ENCODE measurements at regions of chr10 and their contacts with region 1.

Region 1: GRCh38 chr10:59580026-59580863 is 129.4 kb downstream of the SLC16A9 start:
- H3K4me3 ChIP-seq: no peak overlapping the region
- H3K27ac ChIP-seq: no peak overlapping the region
- H3K4me1 ChIP-seq: no peaks in the 10 kb centered on the region
- CTCF ChIP-seq: 0 out of 2 replicates have a peak, but pooled peaks have one; percentile 15

Region 2: GRCh38 chr10:59234816-59235429 is 345.3 kb before region 1 on chr10:
- CTCF ChIA-PET with region 1: interaction called, 24 read pairs
- POLR2A ChIA-PET with region 1: no interaction called
- H3K4me3 ChIP-seq: no peak overlapping the region
- H3K27ac ChIP-seq: no peak overlapping the region
- H3K4me1 ChIP-seq: 0 out of 2 replicates have a peak, but pooled peaks cover 2% of the 10 kb centered on the region
- CTCF ChIP-seq: no peak

Region 3: GRCh38 chr10:59240582-59241183 is 339.6 kb before region 1 on chr10:
- CTCF ChIA-PET with region 1: interaction called, 24 read pairs
- POLR2A ChIA-PET with region 1: no interaction called
- H3K4me3 ChIP-seq: no peak overlapping the region
- H3K27ac ChIP-seq: no peak overlapping the region
- H3K4me1 ChIP-seq: no peaks in the 10 kb centered on the region
- CTCF ChIP-seq: no peak

Region 4: GRCh38 chr10:59595593-59595992 is 15.3 kb after region 1 on chr10:
- CTCF ChIA-PET with region 1: no interaction called
- POLR2A ChIA-PET with region 1: no interaction called
- H3K4me3 ChIP-seq: no peak overlapping the region
- H3K27ac ChIP-seq: no peak overlapping the region
- H3K4me1 ChIP-seq: no peaks in the 10 kb centered on the region
- CTCF ChIP-seq: no peak